GM12878 (cell line): ENCODE measurements at regions of chr10 and their contacts with region 1.

Region 1: GRCh38 chr10:1737222-1738061 is at the start of gene ADARB2:
- DNase-seq: peak; percentile 53
- ATAC-seq: peak; percentile 84
- H3K4me3 ChIP-seq: peak within 1 kb of the TSS; percentile 69
- H3K27ac ChIP-seq: peak within 1 kb of the TSS; percentile 76
- H3K4me1 ChIP-seq: peaks cover 21% of the 10 kb centered on the region
- H3K27me3 ChIP-seq: no peaks in the 10 kb centered on the region
- CTCF ChIP-seq: no peak
- EP300 ChIP-seq: peak in 1 of 2 experiments; percentile 57; a peak in 1 of 4 replicates
- POLR2A ChIP-seq: peak; percentile 80
- RAD21 ChIP-seq: no peak
- polyA plus RNA-seq, gene ADARB2: 0.02 to 0.04 TPM

Region 2: DNA sequence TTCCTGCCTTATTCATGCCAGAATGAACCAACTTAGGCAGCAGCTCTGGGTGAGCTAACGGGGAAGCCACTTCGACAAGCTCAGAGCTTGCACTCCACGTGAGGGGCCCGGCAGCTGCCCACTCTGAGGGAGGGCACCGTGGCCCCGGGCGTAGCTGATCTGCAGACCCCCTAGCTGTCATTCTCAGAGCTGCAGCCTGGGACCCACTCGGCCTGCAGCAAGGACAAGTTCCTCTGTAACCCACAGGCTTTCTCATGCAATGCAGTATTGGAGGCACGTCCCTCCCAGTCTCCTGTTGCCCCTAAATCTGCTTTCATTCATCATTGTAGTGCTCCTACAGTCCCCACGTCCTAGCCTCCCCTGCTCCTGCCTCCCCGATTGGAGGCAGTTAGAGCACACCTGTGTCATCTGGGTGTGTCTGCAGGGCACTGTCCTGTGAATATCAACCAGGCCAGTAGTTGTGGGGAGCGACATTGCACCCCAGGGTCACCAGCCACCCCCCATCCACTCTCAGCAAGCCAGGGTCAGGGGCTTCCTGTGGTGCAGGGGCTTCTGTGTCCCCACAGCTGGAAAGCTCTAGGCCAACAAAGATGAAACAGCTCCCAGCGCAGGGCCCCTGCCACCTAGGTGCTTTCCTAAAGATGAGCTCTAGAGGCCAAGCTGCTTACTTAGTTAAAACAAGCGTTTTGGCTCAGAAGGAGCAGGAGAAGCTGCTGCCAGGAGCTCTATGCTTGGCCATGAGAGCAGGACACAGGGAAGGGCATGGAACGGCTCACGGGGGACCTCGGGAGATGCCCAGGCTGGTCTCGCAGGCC is 333.7 kb before region 1 on chr10:
- CTCF ChIA-PET with region 1: no interaction called
- POLR2A ChIA-PET with region 1: no interaction called
- RAD21 ChIA-PET with region 1: no interaction called
- SMC1A ChIA-PET with region 1: no interaction called
- in situ Hi-C with region 1: no loop called
- intact Hi-C with region 1: no loop called
- DNase-seq: no peak
- ATAC-seq: peak; percentile 30; the same call in 1 of the 3 replicates
- H3K4me3 ChIP-seq: no peak overlapping the region
- H3K27ac ChIP-seq: no peak overlapping the region
- H3K4me1 ChIP-seq: no peaks in the 10 kb centered on the region
- H3K27me3 ChIP-seq: no peaks in the 10 kb centered on the region
- CTCF ChIP-seq: no peak
- EP300 ChIP-seq: no peak
- POLR2A ChIP-seq: no peak
- RAD21 ChIP-seq: no peak

Region 3: DNA sequence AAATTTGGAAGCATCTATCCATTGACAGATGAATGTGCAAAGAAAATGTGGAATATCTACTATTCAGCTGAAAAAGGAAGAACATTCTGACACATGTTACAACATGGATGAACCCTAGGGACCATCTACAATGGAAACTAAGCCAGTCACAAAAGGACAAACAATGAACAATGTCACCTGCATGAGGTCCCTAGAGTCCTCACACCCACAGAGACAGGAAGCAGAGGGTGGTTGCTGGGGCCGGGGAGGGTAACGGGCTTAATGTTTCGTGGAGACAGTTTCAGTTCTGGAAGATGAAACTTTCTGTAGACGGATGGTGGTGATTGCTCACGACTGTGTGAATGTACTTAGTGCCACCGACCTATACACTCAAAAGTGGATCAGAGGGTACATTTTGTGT is 283.0 kb before region 1 on chr10:
- CTCF ChIA-PET with region 1: no interaction called
- POLR2A ChIA-PET with region 1: interaction called, 4 read pairs
- RAD21 ChIA-PET with region 1: interaction called, 10 read pairs
- SMC1A ChIA-PET with region 1: interaction called, 5 read pairs
- in situ Hi-C with region 1: no loop called
- intact Hi-C with region 1: no loop called
- DNase-seq: peak; percentile 63
- ATAC-seq: peak; percentile 98
- H3K4me3 ChIP-seq: no peak overlapping the region
- H3K27ac ChIP-seq: peak overlapping the region; percentile 11; the same call in 1 of the 2 replicates
- H3K4me1 ChIP-seq: no peaks in the 10 kb centered on the region
- H3K27me3 ChIP-seq: no peaks in the 10 kb centered on the region
- CTCF ChIP-seq: no peak
- EP300 ChIP-seq: peak; percentile 66 to 74
- POLR2A ChIP-seq: no peak
- RAD21 ChIP-seq: no peak

Region 4: GRCh38 chr10:1648648-1649047 is 88.8 kb before region 1 on chr10:
- CTCF ChIA-PET with region 1: no interaction called
- POLR2A ChIA-PET with region 1: interaction called, 6 read pairs
- RAD21 ChIA-PET with region 1: interaction called, 10 read pairs
- SMC1A ChIA-PET with region 1: interaction called, 7 read pairs
- in situ Hi-C with region 1: no loop called
- intact Hi-C with region 1: no loop called
- DNase-seq: peak; percentile 25
- ATAC-seq: peak; percentile 92
- H3K4me3 ChIP-seq: no peak overlapping the region
- H3K27ac ChIP-seq: no peak overlapping the region
- H3K4me1 ChIP-seq: peaks cover 3% of the 10 kb centered on the region
- H3K27me3 ChIP-seq: no peaks in the 10 kb centered on the region
- CTCF ChIP-seq: no peak
- EP300 ChIP-seq: no peak
- POLR2A ChIP-seq: no peak
- RAD21 ChIP-seq: no peak

Region 5: GRCh38 chr10:1715836-1716245 is 21.6 kb before region 1 on chr10:
- CTCF ChIA-PET with region 1: interaction called, 113 read pairs
- POLR2A ChIA-PET with region 1: interaction called, 10 read pairs
- RAD21 ChIA-PET with region 1: interaction called, 48 read pairs
- SMC1A ChIA-PET with region 1: interaction called, 214 read pairs
- in situ Hi-C with region 1: no loop called
- intact Hi-C with region 1: loop called (anchors 2 kb)
- DNase-seq: peak; percentile 33
- ATAC-seq: peak; percentile 95
- H3K4me3 ChIP-seq: no peak overlapping the region; the same call in 1 of the 2 replicates
- H3K27ac ChIP-seq: no peak overlapping the region
- H3K4me1 ChIP-seq: peaks cover 12% of the 10 kb centered on the region
- H3K27me3 ChIP-seq: no peaks in the 10 kb centered on the region
- CTCF ChIP-seq: peak; percentile 76 to 89 (median 78)
- EP300 ChIP-seq: no peak
- POLR2A ChIP-seq: no peak
- RAD21 ChIP-seq: peak; percentile 46

Region 6: DNA sequence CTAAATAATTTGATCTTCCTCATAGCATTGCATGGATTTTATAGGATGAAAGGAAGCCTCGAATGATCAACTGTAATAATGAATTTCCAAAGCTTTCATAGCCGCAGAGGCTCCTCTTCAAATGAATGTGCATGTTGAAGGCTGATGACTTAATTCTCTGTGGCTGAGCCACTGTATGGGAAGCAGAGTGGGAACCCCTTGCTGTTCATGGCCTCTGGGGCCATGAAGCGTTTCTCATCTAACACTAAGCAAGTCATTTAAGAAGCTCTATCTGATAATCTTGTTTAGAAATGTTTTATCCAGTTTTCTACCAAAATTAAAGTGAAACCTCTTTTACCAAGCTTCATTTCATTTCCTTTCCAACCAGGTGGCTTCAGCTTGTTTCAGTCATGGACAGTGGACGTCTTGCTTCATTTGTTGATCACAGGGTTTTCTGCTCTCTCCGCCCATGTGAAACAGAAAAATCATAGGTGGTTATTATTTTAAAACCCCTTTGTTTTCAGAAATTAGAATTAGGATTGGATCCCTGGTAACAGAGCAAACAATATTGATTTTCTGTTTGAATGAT is 10.2 kb after region 1 on chr10:
- CTCF ChIA-PET with region 1: interaction called, 54 read pairs
- POLR2A ChIA-PET with region 1: interaction called, 3 read pairs
- RAD21 ChIA-PET with region 1: interaction called, 45 read pairs
- SMC1A ChIA-PET with region 1: interaction called, 21 read pairs
- in situ Hi-C with region 1: no loop called
- intact Hi-C with region 1: no loop called
- DNase-seq: no peak
- ATAC-seq: peak; percentile 56
- H3K4me3 ChIP-seq: no peak overlapping the region
- H3K27ac ChIP-seq: no peak overlapping the region
- H3K4me1 ChIP-seq: no peaks in the 10 kb centered on the region; the same call in 1 of the 2 replicates
- H3K27me3 ChIP-seq: no peaks in the 10 kb centered on the region; a peak in 1 of 4 replicates
- CTCF ChIP-seq: no peak
- EP300 ChIP-seq: no peak
- POLR2A ChIP-seq: no peak
- RAD21 ChIP-seq: no peak

Region 7: DNA sequence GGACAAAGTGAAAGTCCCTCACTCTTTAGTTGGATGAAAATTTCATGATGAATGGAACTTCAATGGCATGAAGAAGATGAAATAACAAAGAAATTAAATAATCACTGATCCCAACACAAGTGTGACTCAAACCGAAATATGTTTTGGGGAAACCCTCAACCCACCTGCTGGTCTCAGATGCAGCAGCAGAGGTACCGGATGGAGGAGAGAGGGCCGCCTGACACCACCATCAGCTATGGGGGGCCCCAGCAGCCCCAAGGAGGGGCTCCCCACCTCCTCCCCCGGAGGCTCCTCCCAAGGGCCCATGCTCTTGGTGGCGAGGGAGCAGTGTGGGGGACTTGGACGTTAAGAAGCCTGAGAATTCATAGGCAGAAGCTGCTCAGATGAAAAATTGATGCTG is 137.1 kb after region 1 on chr10:
- CTCF ChIA-PET with region 1: no interaction called
- POLR2A ChIA-PET with region 1: interaction called, 6 read pairs
- RAD21 ChIA-PET with region 1: interaction called, 47 read pairs
- SMC1A ChIA-PET with region 1: interaction called, 19 read pairs
- in situ Hi-C with region 1: no loop called
- intact Hi-C with region 1: no loop called
- DNase-seq: no peak
- ATAC-seq: peak; percentile 90
- H3K4me3 ChIP-seq: no peak overlapping the region
- H3K27ac ChIP-seq: no peak overlapping the region
- H3K4me1 ChIP-seq: peaks cover 4% of the 10 kb centered on the region; the same call in 1 of the 2 replicates
- H3K27me3 ChIP-seq: no peaks in the 10 kb centered on the region; a peak in 2 of 4 replicates
- CTCF ChIP-seq: no peak
- EP300 ChIP-seq: 0 out of 4 replicates have a peak, but pooled peaks of 1 of the 2 experiments have one; percentile 5
- POLR2A ChIP-seq: no peak
- RAD21 ChIP-seq: no peak